H1 (cell line): ENCODE measurements at regions of chr5 and their contacts with region 1.

Region 1: GRCh38 chr5:154940772-154941620 is at the start of gene MRPL22:
- DNase-seq: peak; percentile 81 to 93
- H3K4me3 ChIP-seq: peak within 1 kb of the TSS; percentile 90 to 99 (median 96)
- H3K27ac ChIP-seq: peak within 1 kb of the TSS; percentile 62
- H3K4me1 ChIP-seq: peaks cover 0 to 9% (median 6%) of the 10 kb centered on the region in 4 experiments; a peak in 6 of 7 replicates
- H3K27me3 ChIP-seq: no peaks in the 10 kb centered on the region
- CTCF ChIP-seq: no peak
- EP300 ChIP-seq: no peak
- POLR2A ChIP-seq: peak; percentile 64 to 92
- RAD21 ChIP-seq: no peak
- total RNA-seq, gene MRPL22: 65.6 and 71.2 TPM in 2 replicates

Region 2: DNA sequence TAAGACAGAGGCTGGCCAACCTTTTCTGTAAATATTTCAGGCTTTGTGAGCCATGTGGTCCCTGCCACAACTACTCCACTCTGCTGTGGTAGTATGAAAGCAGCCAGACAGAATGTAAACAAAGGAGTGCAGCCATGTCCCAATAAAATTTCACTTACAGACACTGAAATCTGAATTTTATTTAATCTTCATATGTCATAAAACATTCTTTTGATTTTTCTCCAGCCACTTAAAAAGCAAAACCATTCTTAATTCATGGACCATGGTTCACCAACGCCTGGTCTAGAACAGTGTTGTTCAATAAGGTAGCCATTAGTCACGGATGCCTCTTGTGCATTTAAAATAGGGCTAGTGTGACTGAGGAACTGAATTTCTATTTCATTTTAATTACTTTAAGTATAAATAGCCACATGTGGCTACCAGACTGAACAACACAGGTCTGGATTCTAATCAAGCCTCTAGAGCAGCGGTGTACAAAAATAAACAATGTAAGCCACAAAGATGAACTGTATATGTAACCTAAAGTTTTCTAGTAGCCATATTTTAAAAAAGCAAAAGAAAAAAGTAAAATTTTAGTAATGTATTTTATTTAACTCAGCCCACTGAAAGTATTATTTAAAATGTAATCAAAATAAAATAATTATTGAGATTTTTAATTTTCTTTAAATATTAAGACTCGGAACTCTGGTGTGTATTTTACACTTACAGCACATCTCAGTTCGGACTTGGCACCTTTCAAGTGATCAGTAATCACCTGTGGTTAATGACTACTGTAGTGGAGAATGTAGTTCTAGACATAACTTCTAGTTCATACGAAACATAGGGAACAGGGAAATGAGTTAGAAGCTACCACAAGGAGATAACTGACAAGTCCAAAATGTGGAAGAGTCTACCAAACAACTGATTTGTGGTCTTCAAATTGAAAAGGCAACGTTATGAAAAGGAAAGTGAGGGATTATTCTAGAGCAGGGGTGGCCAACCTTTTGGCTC is 17.3 kb before region 1 on chr5:
- CTCF ChIA-PET with region 1: interaction called, 3 read pairs
- POLR2A ChIA-PET with region 1: interaction called, 14 read pairs
- DNase-seq: no peak
- H3K4me3 ChIP-seq: no peak overlapping the region
- H3K27ac ChIP-seq: no peak overlapping the region
- H3K4me1 ChIP-seq: no peaks in the 10 kb centered on the region
- H3K27me3 ChIP-seq: no peaks in the 10 kb centered on the region
- CTCF ChIP-seq: no peak
- EP300 ChIP-seq: no peak
- POLR2A ChIP-seq: no peak
- RAD21 ChIP-seq: no peak

Region 3: GRCh38 chr5:154972476-154973080 is 31.6 kb after region 1 on chr5:
- CTCF ChIA-PET with region 1: interaction called, 10 read pairs
- POLR2A ChIA-PET with region 1: no interaction called
- DNase-seq: peak in 1 of 2 experiments; percentile 51
- H3K4me3 ChIP-seq: no peak overlapping the region
- H3K27ac ChIP-seq: no peak overlapping the region
- H3K4me1 ChIP-seq: no peaks in the 10 kb centered on the region
- H3K27me3 ChIP-seq: no peaks in the 10 kb centered on the region
- CTCF ChIP-seq: peak; percentile 52 to 84 (median 80)
- EP300 ChIP-seq: no peak
- POLR2A ChIP-seq: no peak
- RAD21 ChIP-seq: peak; percentile 87 to 88

Region 4: DNA sequence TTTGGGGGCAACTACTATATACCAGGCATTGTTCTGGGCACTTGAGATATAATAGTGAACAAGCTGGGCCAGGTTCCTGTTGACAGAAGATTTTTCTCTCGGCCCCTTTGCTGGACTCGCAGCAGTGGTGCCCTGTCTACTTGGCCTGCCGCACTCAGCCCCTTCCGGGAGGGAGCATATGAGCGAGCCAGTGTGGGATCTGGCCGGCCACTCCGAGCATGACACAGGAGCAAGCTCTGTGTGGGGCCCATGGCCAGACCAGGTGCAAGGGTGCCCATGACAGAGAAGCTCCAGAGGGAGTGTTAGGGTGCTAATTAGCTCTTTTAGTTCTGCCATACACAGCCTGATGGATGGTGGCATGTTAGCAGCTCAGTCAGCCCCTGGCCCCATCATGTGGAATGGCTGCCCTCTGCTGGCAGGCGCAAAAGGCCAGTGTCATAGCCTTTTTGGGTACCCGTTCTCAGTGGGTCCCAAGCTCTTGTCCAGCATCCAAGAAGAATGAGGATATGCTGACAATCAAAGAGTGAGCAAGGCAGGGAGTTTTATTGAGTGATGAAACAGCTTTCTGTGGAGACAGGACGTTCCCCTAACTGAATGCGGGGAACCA is 63.2 kb after region 1 on chr5:
- CTCF ChIA-PET with region 1: interaction called, 10 read pairs
- POLR2A ChIA-PET with region 1: no interaction called
- DNase-seq: peak in 1 of 2 experiments; percentile 80
- H3K4me3 ChIP-seq: no peak overlapping the region
- H3K27ac ChIP-seq: no peak overlapping the region
- H3K4me1 ChIP-seq: peaks cover 0 to 1% (median under 1%) of the 10 kb centered on the region in 4 experiments; a peak in 3 of 7 replicates
- H3K27me3 ChIP-seq: no peaks in the 10 kb centered on the region
- CTCF ChIP-seq: peak; percentile 84 to 93 (median 91)
- EP300 ChIP-seq: no peak
- POLR2A ChIP-seq: no peak
- RAD21 ChIP-seq: peak; percentile 86 to 88

Region 5: GRCh38 chr5:155290937-155291336 is 349.9 kb after region 1 on chr5:
- CTCF ChIA-PET with region 1: no interaction called
- POLR2A ChIA-PET with region 1: no interaction called
- DNase-seq: no peak
- H3K4me3 ChIP-seq: no peak overlapping the region
- H3K27ac ChIP-seq: no peak overlapping the region
- H3K4me1 ChIP-seq: peaks cover 0 to 3% (median 1%) of the 10 kb centered on the region in 4 experiments; a peak in 2 of 7 replicates
- H3K27me3 ChIP-seq: no peaks in the 10 kb centered on the region
- CTCF ChIP-seq: no peak
- EP300 ChIP-seq: no peak
- POLR2A ChIP-seq: no peak
- RAD21 ChIP-seq: no peak